ENCODE measurements at regions of chr5 and their contacts with region 1.

Region 1: DNA sequence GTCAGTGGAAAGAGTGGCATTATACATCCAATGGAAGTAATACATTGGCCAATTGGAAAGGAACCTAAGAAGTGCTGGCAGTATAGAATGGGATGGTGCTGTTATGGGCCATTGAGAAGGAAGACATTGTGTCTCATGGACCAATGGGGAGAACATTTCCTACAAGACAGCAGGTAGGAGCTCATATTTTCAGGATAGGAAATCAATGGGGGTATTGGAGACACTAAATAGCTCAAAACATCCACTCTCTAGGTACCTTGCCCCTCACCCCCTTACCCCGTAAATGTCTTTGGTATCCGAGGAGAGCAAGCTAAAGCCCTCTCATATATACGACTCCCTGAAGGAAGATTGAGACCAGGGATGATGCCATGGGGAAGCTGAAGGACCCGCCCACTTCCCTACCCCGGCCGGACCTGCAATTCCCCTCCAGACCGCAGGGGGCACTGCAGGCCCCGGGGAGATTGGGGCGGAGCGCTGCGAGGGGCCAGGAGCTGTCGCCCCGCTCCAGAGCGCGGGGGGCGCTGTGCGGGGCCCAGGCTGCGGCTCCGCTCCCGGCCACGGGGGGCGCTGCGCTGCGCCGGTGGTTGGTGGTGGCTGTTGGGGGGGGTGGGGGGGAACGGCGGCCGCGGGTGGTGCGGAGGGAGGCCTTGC is at the start of gene KDM3B:
- DNase-seq: peak; percentile 86
- H3K4me3 Mint-ChIP-seq: peak within 1 kb of the TSS; percentile 99
- H3K27ac Mint-ChIP-seq: peak within 1 kb of the TSS; percentile 98
- H3K4me1 Mint-ChIP-seq: peaks cover 51% of the 10 kb centered on the region
- H3K27me3 Mint-ChIP-seq: no peaks in the 10 kb centered on the region
- CTCF ChIP-seq: peak; percentile 100
- total RNA-seq, gene KDM3B: 57.8 and 59.0 TPM in 2 replicates

Region 2: GRCh38 chr5:138178516-138179276 is 173.5 kb before region 1 on chr5 and contains the starts of genes BRD8 and KIF20A:
- CTCF ChIA-PET with region 1: interaction called, 12 read pairs
- POLR2A ChIA-PET with region 1: interaction called, 62 read pairs
- intact Hi-C with region 1: loop called (anchors 1 kb)
- DNase-seq: peak; percentile 100
- H3K4me3 Mint-ChIP-seq: no peak within 1 kb of the TSS
- H3K27ac Mint-ChIP-seq: no peak within 1 kb of the TSS
- H3K4me1 Mint-ChIP-seq: peaks cover 17% of the 10 kb centered on the region
- H3K27me3 Mint-ChIP-seq: no peaks in the 10 kb centered on the region
- CTCF ChIP-seq: no peak
- total RNA-seq, gene BRD8: 93.4 and 108 TPM in 2 replicates
- total RNA-seq, gene KIF20A: 19.0 and 30.6 TPM in 2 replicates

Region 3: GRCh38 chr5:138230981-138231589 is 121.1 kb before region 1 on chr5:
- CTCF ChIA-PET with region 1: interaction called, 106 read pairs
- POLR2A ChIA-PET with region 1: interaction called, 3 read pairs
- intact Hi-C with region 1: no loop called
- DNase-seq: peak; percentile 62
- H3K4me3 Mint-ChIP-seq: no peak overlapping the region
- H3K27ac Mint-ChIP-seq: no peak overlapping the region
- H3K4me1 Mint-ChIP-seq: peaks cover 5% of the 10 kb centered on the region
- H3K27me3 Mint-ChIP-seq: no peaks in the 10 kb centered on the region
- CTCF ChIP-seq: no peak

Region 4: DNA sequence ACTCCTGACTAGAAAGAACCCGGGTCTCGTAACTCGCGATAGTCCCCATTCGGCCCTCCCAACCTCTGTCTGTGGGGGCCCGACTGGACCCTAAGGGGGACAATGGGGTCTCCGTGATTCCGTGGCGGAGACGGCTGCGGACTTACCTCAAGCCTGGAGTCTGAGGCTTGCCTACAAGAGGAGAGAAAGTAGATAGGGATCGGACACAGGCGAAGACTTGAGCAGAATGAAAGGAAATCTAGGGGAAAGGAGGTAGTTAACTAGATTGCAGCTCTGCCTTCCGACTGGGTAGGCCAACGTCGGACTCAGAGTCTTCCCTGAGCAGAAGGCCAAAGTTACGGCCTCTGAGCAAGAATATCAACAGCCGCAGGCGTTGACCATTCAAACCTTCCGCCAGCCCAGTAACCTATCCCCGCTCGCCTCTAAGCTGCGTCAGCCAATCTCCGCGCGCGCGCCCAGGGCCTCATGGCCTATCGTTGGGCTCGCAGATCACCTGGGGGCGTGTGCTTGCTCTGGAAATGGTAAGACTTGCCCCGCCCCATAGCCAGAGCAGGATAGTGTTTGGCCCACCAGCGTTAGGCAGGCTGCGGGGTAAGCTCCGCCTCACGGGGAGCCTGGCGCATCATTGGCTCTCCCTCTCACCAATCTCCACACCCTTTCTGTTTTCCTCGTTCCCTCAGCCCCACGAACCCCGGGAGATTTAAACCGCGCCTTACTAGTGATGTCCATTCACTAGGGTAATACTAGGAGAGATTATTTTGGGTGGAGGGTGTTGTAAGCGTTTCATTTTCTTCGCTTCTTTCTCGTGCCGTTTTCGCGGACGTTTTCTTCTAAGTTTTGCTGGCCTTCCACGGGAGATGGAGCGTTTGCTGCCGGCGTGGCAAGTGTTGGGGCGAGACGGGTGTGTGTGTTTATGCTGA is 20.5 kb before region 1 on chr5 and contains the start of gene CDC25C:
- CTCF ChIA-PET with region 1: interaction called, 323 read pairs
- POLR2A ChIA-PET with region 1: interaction called, 395 read pairs
- intact Hi-C with region 1: no loop called
- DNase-seq: peak; percentile 100
- H3K4me3 Mint-ChIP-seq: peak within 1 kb of the TSS; percentile 94
- H3K27ac Mint-ChIP-seq: peak within 1 kb of the TSS; percentile 87
- H3K4me1 Mint-ChIP-seq: peaks cover 37% of the 10 kb centered on the region
- H3K27me3 Mint-ChIP-seq: no peaks in the 10 kb centered on the region
- CTCF ChIP-seq: no peak
- total RNA-seq, gene CDC25C: 10.8 and 12.2 TPM in 2 replicates

Region 5: DNA sequence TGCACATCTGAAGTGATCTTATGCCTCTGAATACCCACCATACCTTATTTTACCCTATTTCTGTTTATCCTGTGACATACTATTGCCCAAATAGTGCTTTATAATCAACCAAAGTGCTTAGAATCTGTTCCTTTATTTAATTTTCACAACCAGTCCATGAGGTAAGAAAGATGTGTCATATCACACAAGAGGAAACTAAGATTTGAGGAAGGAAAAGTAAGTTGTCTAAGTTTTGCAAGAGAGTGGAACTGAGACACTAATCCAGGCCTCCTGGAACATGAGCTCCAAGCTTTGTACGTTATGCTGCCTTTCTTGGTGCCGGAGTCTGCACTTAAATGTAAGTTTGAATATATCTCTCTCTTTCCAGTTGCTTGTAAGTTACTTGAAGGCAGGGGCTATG is 17.5 kb after region 1 on chr5:
- CTCF ChIA-PET with region 1: interaction called, 131 read pairs
- POLR2A ChIA-PET with region 1: interaction called, 52 read pairs
- intact Hi-C with region 1: no loop called
- DNase-seq: no peak
- H3K4me3 Mint-ChIP-seq: no peak overlapping the region
- H3K27ac Mint-ChIP-seq: no peak overlapping the region
- H3K4me1 Mint-ChIP-seq: peaks cover 28% of the 10 kb centered on the region
- H3K27me3 Mint-ChIP-seq: no peaks in the 10 kb centered on the region
- CTCF ChIP-seq: no peak

Region 6: GRCh38 chr5:138408023-138408422 is 55.8 kb after region 1 on chr5:
- CTCF ChIA-PET with region 1: interaction called, 10 read pairs
- POLR2A ChIA-PET with region 1: interaction called, 5 read pairs
- intact Hi-C with region 1: no loop called
- DNase-seq: no peak
- H3K4me3 Mint-ChIP-seq: no peak overlapping the region
- H3K27ac Mint-ChIP-seq: no peak overlapping the region
- H3K4me1 Mint-ChIP-seq: peaks cover 5% of the 10 kb centered on the region
- H3K27me3 Mint-ChIP-seq: no peaks in the 10 kb centered on the region
- CTCF ChIP-seq: no peak

Region 7: DNA sequence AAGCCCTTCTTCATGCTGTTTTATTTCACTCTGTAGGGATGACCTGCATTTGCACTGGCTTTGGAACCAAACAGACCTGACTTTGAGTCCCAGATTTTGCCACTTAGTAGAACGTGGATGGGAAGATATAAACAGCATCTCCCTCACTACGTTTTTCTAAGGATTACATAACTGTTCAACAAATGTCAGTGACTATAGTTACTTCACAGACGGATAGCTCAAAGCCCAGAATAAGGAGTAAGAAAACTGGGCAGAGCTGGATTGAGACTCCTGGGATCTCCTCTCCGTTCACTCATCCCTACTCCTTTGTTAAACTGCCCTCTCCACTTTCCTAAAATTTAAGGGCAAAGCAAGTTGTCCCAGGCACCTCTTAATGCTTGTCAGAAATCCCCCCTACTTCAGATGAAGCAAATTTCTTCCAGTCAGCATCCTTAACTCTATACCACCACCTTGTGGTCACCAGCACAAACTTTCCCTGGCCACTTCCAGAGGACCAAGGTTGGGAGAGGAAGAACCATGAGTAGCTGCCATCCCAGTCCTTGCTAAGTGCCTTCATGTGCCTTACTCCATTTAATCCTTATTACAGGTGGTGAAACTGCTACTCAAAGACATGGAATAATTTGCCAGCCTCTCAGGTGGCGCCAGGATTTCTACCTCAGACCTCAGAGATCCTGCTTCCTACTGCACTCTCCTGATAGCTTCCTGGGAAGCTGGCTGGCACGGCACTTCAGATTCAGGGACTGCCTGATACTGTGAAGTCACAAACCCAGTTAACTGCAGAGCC is 151.5 kb after region 1 on chr5:
- CTCF ChIA-PET with region 1: interaction called, 5 read pairs
- POLR2A ChIA-PET with region 1: interaction called, 12 read pairs
- intact Hi-C with region 1: loop called (anchors 10 kb)
- DNase-seq: peak; percentile 86
- H3K4me3 Mint-ChIP-seq: no peak overlapping the region
- H3K27ac Mint-ChIP-seq: no peak overlapping the region
- H3K4me1 Mint-ChIP-seq: peaks cover 58% of the 10 kb centered on the region
- H3K27me3 Mint-ChIP-seq: no peaks in the 10 kb centered on the region
- CTCF ChIP-seq: peak; percentile 79

Region 8: GRCh38 chr5:138641547-138642298 is 289.5 kb after region 1 on chr5:
- CTCF ChIA-PET with region 1: no interaction called
- POLR2A ChIA-PET with region 1: no interaction called
- intact Hi-C with region 1: no loop called
- DNase-seq: peak; percentile 91
- H3K4me3 Mint-ChIP-seq: no peak overlapping the region
- H3K27ac Mint-ChIP-seq: no peak overlapping the region
- H3K4me1 Mint-ChIP-seq: peaks cover 4% of the 10 kb centered on the region
- H3K27me3 Mint-ChIP-seq: no peaks in the 10 kb centered on the region
- CTCF ChIP-seq: peak; percentile 97

Measured in MCF 10A (cell line).